H1 (cell line): ENCODE measurements at regions of chr1 and their contacts with region 1.

Region 1: DNA sequence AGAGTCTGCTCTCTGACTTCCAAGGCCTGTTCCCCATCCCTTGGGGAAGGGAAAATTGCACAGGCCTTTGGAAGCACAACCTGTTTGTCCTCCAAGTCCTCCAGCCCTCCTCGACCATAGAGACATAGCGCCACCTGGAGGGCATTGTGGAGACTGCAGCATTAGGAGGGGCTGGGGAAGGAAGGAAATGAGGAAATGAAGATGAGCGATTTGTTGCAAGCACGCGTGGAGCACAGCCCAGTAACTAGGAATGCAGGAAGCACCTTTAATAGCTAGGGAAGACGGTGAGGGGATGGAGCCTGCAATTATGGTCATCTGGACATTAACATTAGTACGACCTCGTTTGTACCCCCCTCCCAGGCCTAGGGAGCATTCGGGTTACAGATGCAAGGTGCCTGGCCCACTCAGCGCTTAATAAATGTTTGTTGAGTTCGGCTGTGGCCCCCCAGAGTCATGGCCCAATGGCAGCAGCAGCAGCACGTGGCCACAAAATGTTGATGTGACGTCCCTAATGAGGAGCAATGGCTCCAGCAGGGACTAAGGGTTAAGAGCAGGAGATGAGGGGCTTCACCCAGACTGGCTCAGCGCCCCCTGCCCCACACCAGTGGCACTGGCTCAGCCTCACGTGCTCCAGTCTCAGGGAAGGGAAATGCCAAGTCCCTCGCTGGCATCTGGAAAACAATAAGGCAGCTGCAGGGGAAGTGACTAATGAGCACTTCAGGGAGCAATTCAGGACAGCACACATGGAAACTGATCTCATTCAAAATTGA is 8.0 kb upstream of the CAMK2N1 start:
- DNase-seq: peak; percentile 81 to 97
- H3K4me3 ChIP-seq: peak overlapping the region in 3 of 4 experiments; percentile 20 to 48 (median 26); a peak in 5 of 8 replicates
- H3K27ac ChIP-seq: no peak overlapping the region
- H3K4me1 ChIP-seq: peaks cover 0 to 11% (median 0%) of the 10 kb centered on the region in 4 experiments; a peak in 3 of 7 replicates
- H3K27me3 ChIP-seq: peaks cover 0 to 6% (median under 1%) of the 10 kb centered on the region in 4 experiments; a peak in 4 of 7 replicates
- CTCF ChIP-seq: peak; percentile 91 to 99 (median 96)
- EP300 ChIP-seq: 0 out of 3 replicates have a peak, but pooled peaks of 1 of the 2 experiments have one; percentile 14
- POLR2A ChIP-seq: no peak
- RAD21 ChIP-seq: peak; percentile 99 to 100

Region 2: GRCh38 chr1:20212685-20213331 is 281.2 kb before region 1 on chr1:
- CTCF ChIA-PET with region 1: interaction called, 24 read pairs
- POLR2A ChIA-PET with region 1: interaction called, 4 read pairs
- DNase-seq: peak; percentile 81 to 82
- H3K4me3 ChIP-seq: peak overlapping the region in 1 of 4 experiments; percentile 16; a peak in 1 of 8 replicates
- H3K27ac ChIP-seq: no peak overlapping the region
- H3K4me1 ChIP-seq: peaks cover 0 to 4% (median 2%) of the 10 kb centered on the region in 4 experiments; a peak in 3 of 7 replicates
- H3K27me3 ChIP-seq: no peaks in the 10 kb centered on the region; a peak in 1 of 7 replicates
- CTCF ChIP-seq: peak; percentile 32 to 90 (median 43)
- EP300 ChIP-seq: peak in 1 of 2 experiments; percentile 56; a peak in 1 of 3 replicates
- POLR2A ChIP-seq: no peak
- RAD21 ChIP-seq: peak; percentile 79 to 88

Region 3: DNA sequence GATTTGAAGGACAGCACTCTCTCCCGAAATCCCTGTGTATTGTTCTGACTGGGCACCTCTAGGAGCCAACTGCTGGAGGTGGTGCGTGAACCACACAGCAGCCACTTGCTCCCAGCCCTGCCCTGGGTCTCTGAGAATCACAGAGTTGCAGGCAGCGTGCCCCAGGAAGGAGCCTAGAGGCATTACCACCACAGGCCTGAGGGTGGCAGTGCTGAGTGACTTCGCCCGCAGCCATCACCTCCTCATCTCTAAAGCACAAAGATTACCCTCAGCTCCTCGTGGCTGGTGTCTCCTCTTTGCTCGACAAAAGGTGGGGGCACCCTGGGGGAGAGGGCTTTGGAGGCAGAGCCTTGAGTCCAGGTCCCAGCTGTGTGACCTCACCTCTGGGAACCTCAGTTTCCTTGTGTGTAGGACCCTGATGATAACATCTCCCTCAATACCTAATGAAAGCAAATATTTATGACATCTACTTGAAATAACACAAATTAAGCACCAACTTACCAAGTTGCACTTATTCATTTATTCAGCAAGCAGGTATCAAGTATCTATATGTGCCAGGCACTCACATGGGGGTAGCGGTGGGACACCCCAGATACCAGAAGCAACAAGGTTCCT is 117.0 kb before region 1 on chr1:
- CTCF ChIA-PET with region 1: interaction called, 44 read pairs
- POLR2A ChIA-PET with region 1: no interaction called
- DNase-seq: peak; percentile 41 to 94
- H3K4me3 ChIP-seq: no peak overlapping the region
- H3K27ac ChIP-seq: no peak overlapping the region
- H3K4me1 ChIP-seq: no peaks in the 10 kb centered on the region
- H3K27me3 ChIP-seq: peaks cover 0 to 10% (median 3%) of the 10 kb centered on the region in 4 experiments; a peak in 4 of 7 replicates
- CTCF ChIP-seq: peak; percentile 84 to 93 (median 91)
- EP300 ChIP-seq: no peak
- POLR2A ChIP-seq: no peak
- RAD21 ChIP-seq: peak; percentile 65 to 76

Region 4: DNA sequence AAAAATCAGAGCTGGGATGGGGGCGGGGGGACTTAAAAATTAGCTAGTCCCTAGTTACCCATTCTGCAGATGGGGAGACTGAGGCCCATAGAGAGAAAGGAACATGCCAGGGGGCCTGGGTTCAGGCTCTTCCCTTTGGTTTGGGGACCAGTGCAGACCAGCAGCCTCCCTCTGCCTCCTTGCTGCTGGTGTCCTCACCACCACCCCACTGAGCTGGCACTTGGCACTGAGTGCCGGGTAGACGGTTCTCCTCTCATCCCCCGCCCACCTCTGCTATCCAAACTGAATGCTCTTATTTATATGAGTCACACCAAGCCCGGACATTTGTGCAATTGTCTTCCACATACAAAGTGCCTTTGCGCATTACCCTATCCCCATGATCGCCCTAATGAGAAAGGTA is 47.2 kb before region 1 on chr1:
- CTCF ChIA-PET with region 1: interaction called, 10 read pairs
- POLR2A ChIA-PET with region 1: no interaction called
- DNase-seq: no peak
- H3K4me3 ChIP-seq: no peak overlapping the region
- H3K27ac ChIP-seq: no peak overlapping the region
- H3K4me1 ChIP-seq: peaks cover 2 to 15% (median 5%) of the 10 kb centered on the region in 4 experiments; a peak in 5 of 7 replicates
- H3K27me3 ChIP-seq: no peaks in the 10 kb centered on the region; a peak in 2 of 7 replicates
- CTCF ChIP-seq: no peak
- EP300 ChIP-seq: no peak
- POLR2A ChIP-seq: no peak
- RAD21 ChIP-seq: no peak

Region 5: GRCh38 chr1:20472860-20473711 is 20.9 kb before region 1 on chr1:
- CTCF ChIA-PET with region 1: interaction called, 10 read pairs
- POLR2A ChIA-PET with region 1: interaction called, 3 read pairs
- DNase-seq: peak in 1 of 2 experiments; percentile 89
- H3K4me3 ChIP-seq: peak overlapping the region; percentile 10 to 50 (median 23); a peak in 4 of 8 replicates
- H3K27ac ChIP-seq: no peak overlapping the region
- H3K4me1 ChIP-seq: peaks cover 8 to 19% (median 12%) of the 10 kb centered on the region in 4 experiments; a peak in 6 of 7 replicates
- H3K27me3 ChIP-seq: peaks cover 0 to 8% (median 4%) of the 10 kb centered on the region in 4 experiments; a peak in 5 of 7 replicates
- CTCF ChIP-seq: no peak
- EP300 ChIP-seq: no peak
- POLR2A ChIP-seq: no peak
- RAD21 ChIP-seq: no peak

Region 6: DNA sequence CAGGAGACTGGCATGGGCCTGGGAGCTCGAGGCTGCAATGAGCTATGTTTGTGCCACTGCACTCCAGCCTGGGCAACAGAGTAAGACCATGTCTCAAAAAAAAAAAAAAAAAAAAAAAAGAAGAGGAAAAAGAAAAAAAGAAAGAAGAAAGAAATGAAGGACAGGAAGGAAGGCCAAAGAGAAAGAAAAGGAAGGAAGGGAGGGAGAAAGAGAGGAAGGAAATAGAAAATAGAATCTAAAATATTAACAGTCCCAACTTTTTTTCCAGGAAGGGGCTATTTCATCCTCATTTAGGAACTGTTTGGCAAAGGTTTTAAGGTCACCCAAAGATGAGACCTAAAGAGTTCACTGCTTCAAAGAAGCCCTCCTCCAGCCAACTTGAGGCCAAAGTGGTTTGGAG is 11.5 kb after region 1 on chr1:
- CTCF ChIA-PET with region 1: interaction called, 16 read pairs
- POLR2A ChIA-PET with region 1: interaction called, 4 read pairs
- DNase-seq: no peak
- H3K4me3 ChIP-seq: no peak overlapping the region
- H3K27ac ChIP-seq: no peak overlapping the region
- H3K4me1 ChIP-seq: peaks cover 0 to 3% (median 2%) of the 10 kb centered on the region in 4 experiments; a peak in 2 of 7 replicates
- H3K27me3 ChIP-seq: no peaks in the 10 kb centered on the region; a peak in 1 of 7 replicates
- CTCF ChIP-seq: no peak
- EP300 ChIP-seq: no peak
- POLR2A ChIP-seq: no peak
- RAD21 ChIP-seq: no peak